Posterior vena cava (tissue), 2 donors: ENCODE measurements at regions of chr20 and their contacts with region 1.

Region 1: DNA sequence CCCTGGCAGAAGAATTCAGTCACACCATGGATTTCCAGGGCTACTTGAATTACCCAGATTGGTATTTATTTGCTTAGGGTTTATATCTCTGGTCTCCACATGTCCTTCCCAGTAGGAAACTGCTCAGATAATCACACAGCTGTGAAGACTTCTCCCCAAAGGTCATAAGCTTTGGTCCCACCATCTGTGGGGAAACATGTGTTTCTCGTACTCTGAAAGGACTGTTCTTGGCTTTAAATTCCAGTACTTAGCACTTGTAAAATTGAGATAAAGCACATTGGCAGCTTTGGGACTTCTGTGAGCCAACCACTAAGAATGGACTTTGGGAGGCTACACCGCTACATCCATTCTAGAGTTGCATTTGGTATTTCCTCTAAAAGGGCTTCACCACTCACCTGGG is 205.3 kb upstream of the FOXA2 start:
- DNase-seq: no peak

Region 2: GRCh38 chr20:22908440-22908839 is 118.8 kb after region 1 on chr20:
- intact Hi-C with region 1: no loop called
- DNase-seq: no peak

Region 3: GRCh38 chr20:24389686-24390085 is 1600.0 kb after region 1 on chr20:
- intact Hi-C with region 1: loop called in 1 of 2 experiments (anchors 10 kb)
- DNase-seq: no peak